Activated CD8-positive, alpha-beta T cell treated with anti-CD3 and anti-CD28 coated beads for 36 hours (primary cell): ENCODE measurements at regions of chr5 and their contacts with region 1.

Region 1: DNA sequence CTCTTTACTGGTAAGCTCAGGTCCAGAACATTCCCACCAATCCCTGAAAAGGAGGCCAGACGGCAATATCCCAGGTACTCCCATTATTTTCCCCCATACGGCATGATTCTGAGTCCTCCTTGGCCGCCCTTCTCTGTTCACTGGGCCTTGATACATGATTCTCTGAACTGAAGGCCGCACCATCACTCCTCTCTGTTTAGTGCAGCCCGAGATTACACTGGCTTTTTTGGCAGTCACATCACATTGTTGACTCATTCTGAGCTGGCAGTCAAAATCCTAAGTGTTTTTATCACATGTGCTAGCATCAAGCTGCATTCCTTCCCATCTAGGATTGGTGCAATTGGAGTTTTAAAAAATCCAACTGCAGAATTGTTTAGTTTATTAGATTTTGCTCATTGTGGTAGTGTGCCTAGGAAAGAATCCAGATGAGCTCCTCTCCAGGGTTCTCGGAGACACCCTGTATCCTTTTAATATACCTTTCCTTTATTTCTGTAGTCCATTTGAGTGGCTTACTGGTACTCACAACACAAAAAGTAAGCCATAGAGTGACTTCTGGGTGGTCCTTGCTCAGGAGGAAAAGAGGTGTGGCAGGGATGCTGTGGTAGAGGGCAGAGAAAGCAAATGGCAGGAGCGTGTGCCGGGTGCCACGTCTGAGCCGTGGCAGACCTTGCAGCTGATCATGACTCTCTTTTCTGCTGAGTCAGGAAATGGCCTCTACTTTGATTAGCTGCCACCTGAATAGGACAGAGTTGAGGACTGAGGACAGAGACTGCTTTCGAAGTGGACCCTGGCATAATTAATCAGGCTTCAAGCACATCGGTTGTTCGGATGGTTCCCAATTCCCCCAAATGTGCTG is 121.1 kb upstream of the IL12B start:
- DNase-seq: no peak
- ATAC-seq: no peak
- H3K4me3 Mint-ChIP-seq: no peak overlapping the region
- H3K27ac Mint-ChIP-seq: no peak overlapping the region
- H3K4me1 Mint-ChIP-seq: peaks cover 12% of the 10 kb centered on the region
- H3K27me3 Mint-ChIP-seq: peaks cover 24% of the 10 kb centered on the region
- CTCF ChIP-seq: no peak

Region 2: DNA sequence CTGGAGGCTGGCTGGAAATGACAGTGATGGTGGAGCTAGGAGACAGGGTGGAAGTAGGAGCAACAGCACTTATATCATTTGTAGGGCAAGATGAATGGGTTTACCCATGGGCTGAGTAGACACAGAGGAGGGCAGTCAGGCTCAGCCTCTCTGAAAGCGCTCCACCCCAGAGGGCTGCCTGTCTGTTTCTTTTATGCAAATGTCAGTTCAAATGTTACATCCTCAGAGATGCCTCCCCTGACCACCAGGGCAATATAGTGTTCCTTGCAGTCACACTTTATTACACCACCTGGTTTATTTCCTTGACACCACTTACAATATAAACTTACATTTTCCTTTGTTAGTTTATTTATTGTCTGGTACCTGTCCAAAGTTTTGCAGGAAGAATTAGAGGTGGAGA is 38.4 kb after region 1 on chr5:
- CTCF ChIA-PET with region 1: no interaction called
- POLR2A ChIA-PET with region 1: no interaction called
- intact Hi-C with region 1: no loop called
- DNase-seq: no peak
- ATAC-seq: no peak
- H3K4me3 Mint-ChIP-seq: no peak overlapping the region
- H3K27ac Mint-ChIP-seq: no peak overlapping the region
- H3K4me1 Mint-ChIP-seq: no peaks in the 10 kb centered on the region
- H3K27me3 Mint-ChIP-seq: peaks cover 6% of the 10 kb centered on the region
- CTCF ChIP-seq: no peak

Region 3: GRCh38 chr5:159965031-159965837 is 513.8 kb after region 1 on chr5:
- CTCF ChIA-PET with region 1: no interaction called
- POLR2A ChIA-PET with region 1: no interaction called
- intact Hi-C with region 1: loop called (anchors 5 kb)
- DNase-seq: peak; percentile 42
- ATAC-seq: peak; percentile 61
- H3K4me3 Mint-ChIP-seq: no peak overlapping the region
- H3K27ac Mint-ChIP-seq: no peak overlapping the region
- H3K4me1 Mint-ChIP-seq: no peaks in the 10 kb centered on the region
- H3K27me3 Mint-ChIP-seq: peaks cover 26% of the 10 kb centered on the region
- CTCF ChIP-seq: peak; percentile 49